ENCODE measurements at regions of chr18 and their contacts with region 1.

Region 1: DNA sequence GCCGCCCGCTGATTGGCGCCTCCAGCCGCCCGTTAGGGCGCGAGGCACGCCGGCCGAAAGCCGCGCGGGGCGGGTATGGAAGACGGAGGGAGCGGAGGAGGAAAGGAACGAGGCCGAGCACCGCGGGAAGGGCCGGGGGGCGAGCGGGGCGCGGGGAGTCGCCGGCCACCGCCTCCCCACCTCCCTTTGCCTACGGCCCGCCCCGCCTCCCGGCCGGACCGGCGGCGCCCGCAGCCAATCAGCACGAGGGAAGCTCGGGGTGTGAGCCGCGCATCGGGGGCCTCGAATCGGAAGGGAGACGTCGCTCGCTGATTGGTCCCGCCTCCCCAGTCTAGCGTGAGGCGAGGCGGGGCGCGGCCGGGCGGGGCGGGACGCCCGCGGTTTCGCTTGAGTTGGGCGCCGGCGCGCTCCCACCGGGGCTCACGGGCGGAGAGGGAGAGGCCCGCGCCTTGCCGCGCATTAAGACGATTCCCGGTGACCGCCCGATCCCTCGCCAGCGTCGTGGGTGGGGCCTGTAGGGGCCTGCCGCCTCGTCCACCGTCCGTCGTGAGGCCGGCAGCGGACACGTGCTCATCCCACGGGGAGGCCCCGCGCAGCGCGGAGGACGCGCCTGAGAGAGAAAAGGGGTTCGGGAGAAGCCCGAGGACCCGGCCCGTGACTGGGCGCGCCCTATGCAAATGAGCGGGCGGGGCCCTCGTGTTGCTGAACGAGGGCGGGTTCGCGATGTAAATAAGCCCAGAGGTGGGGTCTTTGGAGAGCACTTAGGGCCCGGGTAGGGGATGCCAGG is 665 bp upstream of the SMAD2 start:
- DNase-seq: peak; percentile 97
- ATAC-seq: peak; percentile 88
- H3K4me3 ChIP-seq: peak overlapping the region; percentile 60 to 84 (median 82)
- H3K27ac ChIP-seq: peak overlapping the region; percentile 92 to 97 (median 94)
- H3K4me1 ChIP-seq: peaks cover 32 to 38% of the 10 kb centered on the region in 2 donors
- H3K27me3 ChIP-seq: no peaks in the 10 kb centered on the region
- CTCF ChIP-seq: peak in 1 of 5 experiments; percentile 9
- POLR2A ChIP-seq: peak; percentile 86 to 91

Region 2: DNA sequence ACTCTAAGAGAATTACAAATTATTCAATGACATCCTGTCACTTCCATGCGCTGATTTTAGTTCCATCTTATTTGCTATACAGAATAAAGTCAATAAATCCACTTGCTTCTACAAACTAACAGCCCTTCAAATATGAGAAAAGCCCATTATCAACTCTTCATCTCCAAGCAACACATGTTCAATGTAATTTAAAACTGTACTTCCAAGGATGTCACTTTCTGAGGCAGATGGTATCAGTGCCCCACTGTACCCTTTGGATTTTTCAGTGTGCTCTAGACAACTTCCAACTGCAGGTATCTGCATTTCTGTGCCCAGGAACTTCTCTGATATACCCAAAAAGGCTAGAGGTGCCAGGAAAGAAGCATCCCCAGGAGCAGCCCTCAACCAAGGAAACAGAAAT is 88.3 kb before region 1 on chr18:
- in situ Hi-C with region 1: no loop called
- intact Hi-C with region 1: no loop called
- DNase-seq: no peak
- ATAC-seq: no peak
- H3K4me3 ChIP-seq: no peak overlapping the region
- H3K27ac ChIP-seq: no peak overlapping the region
- H3K4me1 ChIP-seq: no peaks in the 10 kb centered on the region
- H3K27me3 ChIP-seq: no peaks in the 10 kb centered on the region
- CTCF ChIP-seq: no peak
- POLR2A ChIP-seq: no peak

Region 3: GRCh38 chr18:47863041-47863440 is 68.1 kb before region 1 on chr18:
- in situ Hi-C with region 1: no loop called
- intact Hi-C with region 1: loop called (anchors 2 kb)
- DNase-seq: peak; percentile 43 to 62
- ATAC-seq: peak; percentile 98
- H3K4me3 ChIP-seq: no peak overlapping the region
- H3K27ac ChIP-seq: peak overlapping the region; percentile 7 to 27 (median 12)
- H3K4me1 ChIP-seq: peaks cover 28 to 31% of the 10 kb centered on the region in 2 donors
- H3K27me3 ChIP-seq: no peaks in the 10 kb centered on the region
- CTCF ChIP-seq: no peak
- POLR2A ChIP-seq: no peak

Region 4: DNA sequence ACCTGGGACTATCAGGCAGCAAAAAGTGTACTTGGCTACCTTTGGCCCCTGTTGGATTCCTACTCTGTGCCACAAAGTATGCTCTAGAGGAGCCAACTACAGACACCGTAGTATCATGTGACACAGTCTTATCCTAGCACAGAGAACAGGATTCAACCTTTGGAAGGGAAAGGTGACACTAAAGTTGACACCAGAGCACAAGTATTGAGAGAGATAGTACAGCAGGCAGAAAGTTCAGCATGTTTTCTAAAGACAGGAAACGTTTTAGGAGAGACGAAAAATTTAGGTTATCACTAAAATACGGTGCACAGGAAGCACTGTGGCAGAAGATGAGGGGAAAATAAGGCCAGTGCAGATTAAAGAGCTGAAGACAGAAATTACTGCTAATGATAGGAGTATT is 19.2 kb before region 1 on chr18:
- in situ Hi-C with region 1: no loop called
- intact Hi-C with region 1: no loop called
- DNase-seq: no peak
- ATAC-seq: peak; percentile 77 to 94
- H3K4me3 ChIP-seq: no peak overlapping the region
- H3K27ac ChIP-seq: peak overlapping the region; percentile 51 to 78 (median 66)
- H3K4me1 ChIP-seq: peaks cover 46 to 49% of the 10 kb centered on the region in 2 donors
- H3K27me3 ChIP-seq: no peaks in the 10 kb centered on the region
- CTCF ChIP-seq: no peak
- POLR2A ChIP-seq: no peak

Region 5: DNA sequence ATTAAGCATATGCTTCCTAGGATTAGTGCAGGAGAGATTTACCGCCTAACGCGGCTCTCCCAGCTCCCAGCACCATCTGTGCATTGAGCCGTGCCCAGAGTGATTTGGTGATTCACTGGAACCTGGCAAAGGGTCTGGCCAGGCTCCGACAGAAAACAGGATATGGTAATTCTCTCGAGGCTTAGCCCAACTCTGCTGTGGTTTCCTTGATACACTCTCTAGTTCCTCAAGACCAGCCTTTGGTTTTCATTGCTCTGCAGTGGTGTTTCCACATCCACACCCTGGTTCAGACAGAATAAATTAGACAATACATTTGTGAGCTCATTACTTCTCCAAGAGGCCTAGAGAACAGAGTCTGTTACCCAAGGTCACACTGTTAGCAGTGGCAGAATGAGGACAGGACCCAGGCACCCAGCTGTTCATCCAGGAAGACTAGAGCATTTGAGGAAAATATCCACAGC is 22.4 kb after region 1 on chr18:
- in situ Hi-C with region 1: no loop called
- intact Hi-C with region 1: no loop called
- DNase-seq: peak; percentile 9 to 31
- ATAC-seq: peak in 1 of 2 donors; percentile 80
- H3K4me3 ChIP-seq: no peak overlapping the region
- H3K27ac ChIP-seq: no peak overlapping the region
- H3K4me1 ChIP-seq: peaks cover 0 to 8% of the 10 kb centered on the region in 2 donors
- H3K27me3 ChIP-seq: no peaks in the 10 kb centered on the region
- CTCF ChIP-seq: no peak
- POLR2A ChIP-seq: no peak

Region 6: DNA sequence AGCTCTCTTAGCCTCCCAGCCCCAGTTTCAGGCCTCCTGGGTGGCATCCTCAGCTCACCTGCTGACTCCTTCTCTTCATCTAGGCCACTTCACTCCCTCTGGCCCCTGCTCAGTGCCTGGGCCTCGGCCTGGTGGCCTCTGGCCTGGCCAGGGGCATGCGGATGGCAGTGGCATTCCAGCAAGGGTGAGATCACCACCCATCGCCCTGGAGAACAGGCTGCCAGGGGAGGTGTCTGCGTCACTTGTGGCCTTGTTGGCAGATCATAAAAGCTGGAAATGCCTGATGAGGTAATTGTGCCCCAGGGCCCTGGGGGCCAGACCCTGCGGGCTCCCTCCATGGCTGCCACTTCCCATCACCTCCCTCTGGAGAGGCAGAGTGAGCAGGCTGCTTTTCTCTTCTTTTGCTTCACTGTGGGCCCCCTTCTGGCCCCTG is 71.8 kb after region 1 on chr18:
- in situ Hi-C with region 1: no loop called
- intact Hi-C with region 1: loop called (anchors 5 kb)
- DNase-seq: peak in 1 of 2 donors; percentile 42
- ATAC-seq: peak in 1 of 2 donors; percentile 60
- H3K4me3 ChIP-seq: no peak overlapping the region
- H3K27ac ChIP-seq: peak overlapping the region in 3 of 4 donors; percentile 27 to 50 (median 48)
- H3K4me1 ChIP-seq: peaks cover 0 to 11% of the 10 kb centered on the region in 2 donors
- H3K27me3 ChIP-seq: no peaks in the 10 kb centered on the region
- CTCF ChIP-seq: no peak
- POLR2A ChIP-seq: no peak

Region 7: DNA sequence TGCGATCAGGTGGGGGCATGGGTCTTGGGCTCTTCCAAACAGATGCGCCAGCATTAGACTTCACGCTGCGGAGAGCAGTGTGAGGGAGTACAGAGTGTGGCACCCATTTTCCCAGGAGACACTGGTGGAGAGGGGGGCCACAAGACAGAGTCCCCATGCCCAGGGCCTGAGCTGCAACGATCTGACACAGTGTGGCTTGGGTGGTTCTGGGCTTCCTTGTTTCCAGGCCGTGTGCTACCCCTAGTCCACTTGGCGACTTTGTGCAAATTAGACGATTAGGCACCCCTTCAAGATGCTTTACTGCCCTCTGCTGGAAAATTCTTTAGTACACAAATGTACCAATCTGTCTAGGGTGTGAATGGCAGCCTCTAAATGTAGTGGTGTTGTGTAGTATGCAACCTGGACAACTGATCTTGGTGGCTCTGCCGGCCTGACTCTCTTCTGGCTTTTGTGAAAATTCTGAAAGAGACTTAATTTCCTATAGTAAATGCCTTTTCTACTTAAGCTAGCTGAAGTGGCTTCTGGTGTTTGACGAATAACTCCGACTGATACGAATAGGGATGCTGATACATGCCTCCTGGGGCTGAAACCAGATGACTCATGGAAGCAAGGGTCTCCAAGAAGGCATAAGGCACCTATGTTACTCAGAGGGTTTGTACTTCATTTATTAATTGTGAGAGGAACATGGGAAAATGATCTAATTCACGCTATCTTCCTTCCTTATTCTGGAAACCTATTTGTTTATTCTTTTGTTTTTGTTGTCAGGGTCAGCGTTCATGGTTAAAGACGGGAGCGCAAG is 91.6 kb after region 1 on chr18:
- in situ Hi-C with region 1: no loop called
- intact Hi-C with region 1: loop called (anchors 5 kb)
- DNase-seq: no peak
- ATAC-seq: peak; percentile 70 to 81
- H3K4me3 ChIP-seq: no peak overlapping the region
- H3K27ac ChIP-seq: no peak overlapping the region
- H3K4me1 ChIP-seq: peaks cover 5% of the 10 kb centered on the region in 2 donors
- H3K27me3 ChIP-seq: no peaks in the 10 kb centered on the region
- CTCF ChIP-seq: peak; percentile 25 to 67 (median 60)
- POLR2A ChIP-seq: no peak

Region 8: DNA sequence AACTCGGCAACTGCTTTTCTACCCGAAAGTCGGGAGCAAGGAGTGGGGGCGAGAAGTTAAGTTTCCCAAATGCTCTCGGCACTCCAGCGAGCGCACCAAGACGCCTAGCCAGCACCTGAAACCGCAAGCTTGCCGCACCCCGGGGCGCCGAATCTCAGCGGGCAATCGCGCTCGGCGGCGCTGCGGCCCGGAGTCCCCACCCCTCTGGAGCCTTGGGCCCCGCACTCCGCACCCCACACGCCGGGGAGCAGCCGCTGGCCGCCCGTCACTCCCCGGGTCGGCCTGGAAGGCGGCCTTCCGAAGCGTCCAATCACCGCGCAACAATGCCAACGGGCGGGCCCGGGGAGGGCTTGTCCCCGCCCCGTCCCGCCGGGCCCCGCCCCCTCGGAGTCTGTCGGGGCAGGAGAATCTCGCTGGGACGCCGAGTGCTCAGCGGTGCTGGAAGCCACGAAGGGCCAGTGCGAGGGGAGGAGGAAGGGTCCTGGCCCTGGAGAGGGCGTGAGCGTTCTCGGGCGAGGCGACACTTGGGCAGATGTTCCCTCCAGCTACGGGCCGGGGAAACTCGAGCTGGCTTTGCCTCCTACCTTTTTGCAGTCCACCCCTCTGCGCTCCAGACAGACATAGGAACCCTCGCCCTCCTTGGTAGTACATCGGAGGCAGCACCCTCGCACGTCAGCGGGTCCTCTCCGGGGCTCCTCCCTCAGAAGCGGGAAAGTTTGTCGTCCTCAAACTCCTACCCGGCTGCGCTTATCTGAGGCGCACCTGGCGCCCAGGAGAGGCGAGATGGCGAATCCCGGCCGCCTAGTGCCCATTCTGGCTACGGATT is 479.2 kb after region 1 on chr18:
- in situ Hi-C with region 1: no loop called
- intact Hi-C with region 1: loop called (anchors 2 kb)
- DNase-seq: peak; percentile 84
- ATAC-seq: peak; percentile 85 to 86
- H3K4me3 ChIP-seq: peak overlapping the region; percentile 78 to 88 (median 85)
- H3K27ac ChIP-seq: peak overlapping the region; percentile 71 to 88 (median 78)
- H3K4me1 ChIP-seq: peaks cover 10 to 11% of the 10 kb centered on the region in 2 donors
- H3K27me3 ChIP-seq: peaks cover 21 to 38% (median 27%) of the 10 kb centered on the region in 3 donors
- CTCF ChIP-seq: peak in 1 of 5 experiments; percentile 10
- POLR2A ChIP-seq: peak; percentile 76 to 79

Region 9: DNA sequence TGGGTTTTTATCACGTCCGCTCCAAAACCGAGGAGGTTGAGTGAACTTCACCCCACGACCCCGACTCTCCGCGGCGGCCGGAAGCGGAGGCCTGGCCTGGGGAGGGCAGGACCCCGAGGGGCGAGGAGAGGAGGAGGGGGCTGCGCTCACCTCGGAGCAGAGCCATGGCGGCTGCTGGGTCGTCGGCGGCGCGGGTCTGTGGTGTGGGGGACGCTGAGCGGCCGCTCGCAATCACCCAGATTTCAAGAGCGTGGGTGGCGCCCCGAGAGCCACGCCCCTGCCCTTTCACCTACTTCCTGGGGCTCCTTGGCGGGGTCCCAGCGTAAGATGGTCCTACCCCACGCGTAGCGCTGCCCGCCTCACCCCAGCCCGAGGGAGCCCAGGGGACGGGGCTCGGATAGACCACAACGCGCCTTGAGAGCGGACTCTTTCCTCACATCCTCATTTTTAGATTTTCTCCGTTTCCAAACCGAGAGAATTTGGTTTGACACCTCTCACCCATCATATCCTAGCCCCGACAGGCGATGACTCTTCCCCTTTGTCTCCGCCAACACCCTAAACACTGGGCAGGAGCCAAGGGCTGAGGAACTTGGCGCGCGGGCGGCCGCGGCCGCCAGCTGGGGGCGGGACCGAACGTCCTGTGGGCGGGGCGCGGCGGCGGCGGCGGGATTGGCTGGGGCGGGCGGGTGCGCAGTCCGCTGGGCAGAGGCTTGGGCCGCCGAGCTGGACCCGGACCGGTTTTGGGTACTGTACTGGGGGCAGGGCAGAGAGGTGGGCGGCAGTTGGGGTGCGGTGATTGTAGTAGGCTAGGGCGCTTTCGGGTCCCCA is 1882.4 kb after region 1 on chr18 and contains the start of gene ACAA2:
- in situ Hi-C with region 1: no loop called
- intact Hi-C with region 1: loop called (anchors 10 kb)
- DNase-seq: peak; percentile 78 to 82
- ATAC-seq: peak; percentile 90 to 91
- H3K4me3 ChIP-seq: peak within 1 kb of the TSS; percentile 88 to 95 (median 92)
- H3K27ac ChIP-seq: peak within 1 kb of the TSS; percentile 93 to 99 (median 96)
- H3K4me1 ChIP-seq: peaks cover 14 to 20% of the 10 kb centered on the region in 2 donors
- H3K27me3 ChIP-seq: no peaks in the 10 kb centered on the region
- CTCF ChIP-seq: no peak
- POLR2A ChIP-seq: peak; percentile 38 to 65
- total RNA-seq, gene ACAA2: 73.7 to 95.7 (median 79.6) TPM

Measured in gastrocnemius medialis (tissue), 4 donors.